Tibial artery (tissue), 4 donors: ENCODE measurements at regions of chr5 and their contacts with region 1.

Region 1: GRCh38 chr5:142782976-142783530 is 12.9 kb downstream of the ARHGAP26 start:
- DNase-seq: peak; percentile 30 to 68
- H3K4me3 ChIP-seq: no peak overlapping the region
- H3K27ac ChIP-seq: peak overlapping the region; percentile 3 to 20
- H3K4me1 ChIP-seq: peaks cover 0 to 32% (median 17%) of the 10 kb centered on the region in 4 donors
- H3K27me3 ChIP-seq: no peaks in the 10 kb centered on the region
- CTCF ChIP-seq: no peak

Region 2: DNA sequence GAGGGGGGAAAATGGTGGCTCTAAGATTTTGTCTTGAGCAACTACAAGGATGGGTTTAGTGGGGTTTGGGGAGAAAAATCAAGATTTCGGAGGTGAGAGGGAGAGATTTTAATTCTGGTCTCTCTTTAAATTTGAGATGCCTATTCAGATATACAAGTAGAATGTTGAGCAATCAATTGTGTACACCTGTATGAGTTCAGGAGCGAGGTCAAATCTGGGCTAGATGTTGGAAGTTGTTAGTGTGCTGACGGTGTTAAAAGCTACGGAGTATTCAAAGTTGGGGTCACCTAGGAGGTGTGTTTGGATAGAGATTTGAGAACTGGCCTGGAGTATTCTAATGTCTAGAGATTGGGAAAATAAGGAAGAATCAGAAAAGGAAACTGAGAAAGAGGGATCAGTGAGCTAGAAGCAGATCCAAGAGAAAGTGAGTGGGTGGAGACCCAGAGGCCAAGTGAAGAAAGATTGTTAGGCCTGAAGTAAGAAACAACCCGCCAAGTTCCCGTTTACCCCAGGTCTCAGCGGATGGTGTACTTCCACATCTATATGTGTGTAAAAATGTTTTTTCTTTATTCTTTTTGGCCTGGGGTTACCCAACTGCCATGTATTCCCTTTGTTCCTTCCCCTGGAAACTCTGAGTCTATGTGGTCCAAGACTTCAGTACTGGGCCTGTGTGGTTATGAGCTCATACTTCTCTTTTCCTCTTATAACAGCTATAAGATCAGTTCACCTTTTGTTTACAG is 24.8 kb before region 1 on chr5:
- intact Hi-C with region 1: loop called (anchors 1 kb)
- DNase-seq: no peak
- H3K4me3 ChIP-seq: no peak overlapping the region
- H3K27ac ChIP-seq: no peak overlapping the region
- H3K4me1 ChIP-seq: peaks cover 0 to 15% (median 11%) of the 10 kb centered on the region in 4 donors
- H3K27me3 ChIP-seq: no peaks in the 10 kb centered on the region
- CTCF ChIP-seq: no peak

Region 3: DNA sequence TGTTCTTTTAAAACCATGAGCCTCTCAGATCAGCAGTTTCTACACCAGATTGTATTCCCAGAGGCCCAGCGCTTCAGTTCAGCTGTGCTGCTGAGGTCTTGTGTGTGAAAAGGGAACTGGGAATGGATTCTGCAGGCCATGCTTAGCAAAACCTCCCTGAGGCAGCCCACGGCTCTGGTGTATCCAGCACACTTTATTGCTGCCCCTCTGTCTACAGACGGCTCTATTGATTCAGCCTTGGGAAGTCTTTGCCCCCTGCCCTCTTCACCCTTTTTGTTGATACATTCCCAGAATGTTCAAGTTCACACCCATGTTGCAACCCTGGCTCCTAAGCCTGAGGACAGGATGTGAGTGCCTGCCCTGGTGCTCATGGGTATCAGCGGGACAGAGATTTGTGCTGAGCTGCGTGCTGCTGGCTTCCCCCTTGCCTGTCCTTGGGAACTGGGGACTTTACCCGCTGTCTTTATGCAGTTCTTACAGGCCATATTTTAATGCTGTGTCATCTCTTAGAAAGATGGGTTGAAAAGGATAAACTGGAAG is 24.4 kb after region 1 on chr5:
- intact Hi-C with region 1: no loop called
- DNase-seq: peak in 1 of 2 donors; percentile 42
- H3K4me3 ChIP-seq: no peak overlapping the region
- H3K27ac ChIP-seq: no peak overlapping the region
- H3K4me1 ChIP-seq: peaks cover 0 to 47% (median 7%) of the 10 kb centered on the region in 4 donors
- H3K27me3 ChIP-seq: no peaks in the 10 kb centered on the region
- CTCF ChIP-seq: no peak

Region 4: DNA sequence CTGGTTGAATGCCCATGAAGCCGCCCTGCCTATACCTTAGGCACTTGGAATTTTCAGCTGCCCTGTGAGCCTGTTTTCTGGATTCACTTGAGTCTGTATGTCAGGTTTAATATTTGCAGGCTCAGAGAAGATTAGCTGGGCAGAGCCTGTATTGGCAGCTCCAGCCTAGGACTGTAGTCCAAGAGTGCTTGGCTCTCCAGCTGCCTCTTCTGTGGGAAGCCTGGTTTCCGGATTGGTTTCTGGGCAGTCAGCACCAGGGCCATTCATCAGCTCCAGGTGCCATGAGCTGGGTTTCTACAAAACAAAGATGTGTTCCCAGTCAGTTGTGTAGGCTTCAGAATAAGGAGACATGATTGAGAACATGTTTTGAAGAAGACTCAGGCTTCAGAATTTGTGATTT is 77.2 kb after region 1 on chr5:
- intact Hi-C with region 1: no loop called
- DNase-seq: no peak
- H3K4me3 ChIP-seq: no peak overlapping the region
- H3K27ac ChIP-seq: no peak overlapping the region
- H3K4me1 ChIP-seq: peaks cover 0 to 23% (median 12%) of the 10 kb centered on the region in 4 donors
- H3K27me3 ChIP-seq: no peaks in the 10 kb centered on the region
- CTCF ChIP-seq: no peak